ENCODE measurements at regions of chr7 and their contacts with region 1.

Region 1: GRCh38 chr7:108613112-108613759 is 43.6 kb downstream of the DNAJB9 start:
- DNase-seq: no peak
- ATAC-seq: no peak
- H3K4me3 Mint-ChIP-seq: no peak overlapping the region
- H3K27ac Mint-ChIP-seq: no peak overlapping the region
- H3K4me1 Mint-ChIP-seq: no peaks in the 10 kb centered on the region
- H3K27me3 Mint-ChIP-seq: no peaks in the 10 kb centered on the region

Region 2: DNA sequence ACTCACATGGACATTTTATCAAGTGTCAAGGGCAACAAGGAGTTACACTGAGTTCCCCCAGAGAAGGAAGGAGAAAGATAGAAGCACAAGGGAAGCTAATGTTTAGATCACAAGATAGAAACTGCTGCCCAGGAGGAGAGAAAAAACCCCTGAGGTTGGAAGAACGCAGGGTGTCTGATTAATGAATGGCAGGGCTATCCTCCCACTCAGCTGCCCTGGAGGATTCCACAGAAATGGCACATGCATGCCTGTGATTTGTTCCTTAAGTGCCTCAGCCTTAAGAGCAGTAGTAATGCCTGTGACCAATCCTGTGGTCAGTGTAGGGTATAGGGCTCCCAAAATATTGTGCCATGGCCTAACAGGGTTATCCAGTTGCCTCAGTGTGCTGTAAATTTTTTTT is 23.4 kb before region 1 on chr7:
- CTCF ChIA-PET with region 1: no interaction called
- POLR2A ChIA-PET with region 1: no interaction called
- intact Hi-C with region 1: no loop called
- DNase-seq: no peak
- ATAC-seq: no peak
- H3K4me3 Mint-ChIP-seq: no peak overlapping the region
- H3K27ac Mint-ChIP-seq: no peak overlapping the region
- H3K4me1 Mint-ChIP-seq: no peaks in the 10 kb centered on the region
- H3K27me3 Mint-ChIP-seq: peaks cover 9% of the 10 kb centered on the region

Region 3: DNA sequence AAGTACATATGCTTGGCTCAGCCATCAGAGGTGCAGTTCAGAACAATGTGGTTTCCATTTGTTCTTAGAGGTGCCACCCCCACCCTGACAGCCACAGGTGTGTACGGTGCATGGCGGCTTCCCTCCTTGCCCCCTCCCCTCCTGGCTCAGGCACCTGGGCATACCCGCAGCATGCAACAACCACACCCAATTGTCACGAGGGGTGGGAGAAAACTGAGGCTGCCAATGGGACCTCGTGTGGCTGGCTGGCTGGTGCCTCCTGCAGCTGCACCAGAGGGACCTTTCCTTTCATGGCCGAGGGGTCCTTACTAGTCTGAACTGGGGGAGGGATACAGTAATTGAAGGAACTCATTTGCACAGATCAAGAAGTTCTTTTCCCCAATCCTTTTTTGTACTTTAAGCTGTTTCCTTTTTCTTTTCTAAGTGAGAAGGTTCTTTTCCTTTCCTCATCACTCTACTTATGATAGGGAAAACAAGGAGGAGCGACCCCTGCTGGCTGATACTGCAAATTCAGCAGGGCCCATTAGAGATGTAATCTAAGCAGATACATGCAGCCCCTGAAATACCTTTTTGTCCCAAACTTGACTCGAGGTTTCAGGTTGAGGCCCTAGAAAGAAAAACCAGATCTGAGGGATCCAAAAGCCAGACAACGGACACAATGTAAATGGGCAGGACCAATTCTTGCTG is 261.8 kb after region 1 on chr7:
- CTCF ChIA-PET with region 1: no interaction called
- POLR2A ChIA-PET with region 1: no interaction called
- intact Hi-C with region 1: loop called in 1 of 2 experiments (anchors 2 kb)
- DNase-seq: peak; percentile 46
- ATAC-seq: no peak
- H3K4me3 Mint-ChIP-seq: no peak overlapping the region
- H3K27ac Mint-ChIP-seq: no peak overlapping the region
- H3K4me1 Mint-ChIP-seq: no peaks in the 10 kb centered on the region
- H3K27me3 Mint-ChIP-seq: no peaks in the 10 kb centered on the region

Measured in activated CD4-positive, alpha-beta T cell treated with anti-CD3 and anti-CD28 coated beads for 36 hours (primary cell).